H1 (cell line): ENCODE measurements at regions of chr19 and their contacts with region 1.

Region 1: DNA sequence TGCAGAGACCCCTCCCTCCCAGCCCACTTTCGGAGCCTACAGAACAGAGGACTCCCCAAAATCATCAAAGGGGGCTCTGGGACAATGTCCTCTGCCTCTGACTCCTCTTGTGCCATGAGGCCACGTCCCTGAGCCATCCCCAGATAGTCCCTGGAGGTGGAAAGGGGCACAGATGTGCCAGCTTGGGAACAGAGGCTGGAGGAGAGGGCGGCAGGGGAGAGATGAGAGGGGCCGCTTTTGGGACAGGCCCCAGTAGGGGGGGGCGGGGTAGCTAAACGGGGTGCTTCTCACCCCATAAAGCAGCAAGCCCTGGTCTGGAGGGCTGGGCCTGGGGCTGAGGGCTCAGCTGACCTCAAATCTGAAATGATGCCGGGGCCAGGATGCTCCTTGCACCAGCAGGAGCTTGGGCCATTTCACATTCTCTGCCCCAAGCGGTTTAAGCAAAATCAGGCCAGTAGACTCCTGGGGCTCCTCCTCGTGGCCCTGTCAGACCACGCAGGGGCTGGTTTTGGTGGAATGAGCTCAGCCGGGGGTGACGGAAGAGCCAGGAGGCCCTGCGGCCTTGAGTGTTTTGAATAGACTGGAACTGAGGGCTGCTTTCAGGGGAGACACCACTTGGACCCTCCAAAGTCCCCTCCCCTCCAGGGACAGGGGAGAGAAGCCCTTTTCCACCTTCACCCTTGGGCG is 27.1 kb downstream of the ONECUT3 start:
- DNase-seq: no peak
- H3K4me3 ChIP-seq: no peak overlapping the region
- H3K27ac ChIP-seq: no peak overlapping the region
- H3K4me1 ChIP-seq: peaks cover 0 to 5% (median 2%) of the 10 kb centered on the region in 4 experiments; a peak in 3 of 7 replicates
- H3K27me3 ChIP-seq: peaks cover 22 to 57% (median 55%) of the 10 kb centered on the region in 4 experiments
- CTCF ChIP-seq: peak in 2 of 3 experiments; percentile 6 to 42; a peak in 3 of 4 replicates
- EP300 ChIP-seq: no peak
- POLR2A ChIP-seq: no peak
- RAD21 ChIP-seq: no peak

Region 2: DNA sequence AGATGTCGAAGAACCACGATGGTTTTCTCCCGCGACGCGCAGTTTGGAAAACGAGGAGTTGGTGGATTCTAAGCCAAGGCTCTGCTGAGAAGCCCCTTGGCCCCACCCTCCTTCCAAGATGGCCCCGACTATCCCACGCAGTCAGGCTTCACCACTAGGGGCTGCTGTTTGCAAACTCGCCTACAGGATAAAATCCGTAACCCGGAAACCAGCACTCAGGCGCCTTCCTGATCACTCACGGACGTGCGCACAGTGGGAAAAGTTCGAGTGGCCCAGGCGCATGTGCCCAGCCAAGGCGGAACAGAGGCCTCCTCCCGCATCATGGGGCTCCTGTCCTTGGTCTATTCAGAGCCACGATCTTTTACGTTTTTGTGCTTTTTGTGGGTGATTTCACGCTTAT is 156.0 kb before region 1 on chr19:
- CTCF ChIA-PET with region 1: no interaction called
- POLR2A ChIA-PET with region 1: no interaction called
- DNase-seq: peak; percentile 49 to 87
- H3K4me3 ChIP-seq: no peak overlapping the region
- H3K27ac ChIP-seq: no peak overlapping the region
- H3K4me1 ChIP-seq: peaks cover 0 to 8% (median 4%) of the 10 kb centered on the region in 4 experiments; a peak in 3 of 7 replicates
- H3K27me3 ChIP-seq: no peaks in the 10 kb centered on the region
- CTCF ChIP-seq: peak; percentile 89 to 96 (median 96)
- EP300 ChIP-seq: no peak
- POLR2A ChIP-seq: no peak
- RAD21 ChIP-seq: peak; percentile 57 to 73

Region 3: DNA sequence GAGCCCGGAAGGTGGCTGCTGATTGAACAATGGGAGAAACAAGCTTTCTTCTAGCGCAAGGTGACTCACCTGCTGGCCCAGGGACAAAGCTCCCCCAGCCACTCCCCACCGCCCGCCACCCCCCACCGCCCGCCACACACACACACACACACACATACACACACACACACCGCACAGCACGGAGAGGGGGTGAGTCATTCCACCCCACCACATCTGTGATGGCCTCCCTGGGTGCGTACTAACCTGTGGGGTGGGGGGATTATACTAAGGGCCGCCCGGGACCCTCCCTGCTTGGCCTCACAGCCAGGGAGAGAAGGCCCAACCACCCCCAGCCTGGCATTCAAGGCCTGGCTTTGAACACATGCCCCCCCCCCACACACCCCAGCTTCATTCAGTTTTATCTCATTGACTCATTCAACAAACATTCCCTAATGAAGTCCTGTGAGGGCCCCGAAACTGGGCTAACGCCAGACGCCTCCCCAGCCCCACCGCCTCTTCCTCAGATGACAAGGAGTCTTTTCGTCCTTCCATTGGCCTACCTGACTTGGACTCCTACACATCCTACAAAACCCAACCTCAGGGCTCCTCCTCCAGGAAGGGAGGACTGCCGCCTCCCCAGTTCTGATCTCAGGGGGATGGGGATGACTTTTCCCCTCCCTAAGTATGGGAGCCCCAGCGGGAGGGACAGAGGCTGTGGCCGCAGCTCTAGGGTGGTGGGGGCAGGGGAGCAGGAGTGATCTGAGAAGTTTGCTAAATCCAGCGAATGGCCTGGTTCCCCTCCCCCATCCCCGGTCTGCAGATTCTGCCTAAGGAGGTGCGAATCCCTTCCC is 32.9 kb before region 1 on chr19:
- CTCF ChIA-PET with region 1: interaction called, 26 read pairs
- POLR2A ChIA-PET with region 1: interaction called, 3 read pairs
- DNase-seq: peak in 1 of 2 experiments; percentile 54
- H3K4me3 ChIP-seq: peak overlapping the region in 3 of 4 experiments; percentile 22 to 59 (median 34); a peak in 3 of 8 replicates
- H3K27ac ChIP-seq: no peak overlapping the region
- H3K4me1 ChIP-seq: peaks cover 0 to 46% (median 27%) of the 10 kb centered on the region in 4 experiments; a peak in 6 of 7 replicates
- H3K27me3 ChIP-seq: peaks cover 67 to 86% (median 78%) of the 10 kb centered on the region in 4 experiments
- CTCF ChIP-seq: no peak
- EP300 ChIP-seq: no peak
- POLR2A ChIP-seq: no peak
- RAD21 ChIP-seq: no peak

Region 4: GRCh38 chr19:1794424-1795172 is 14.2 kb after region 1 on chr19:
- CTCF ChIA-PET with region 1: interaction called, 150 read pairs
- POLR2A ChIA-PET with region 1: interaction called, 4 read pairs
- DNase-seq: peak in 1 of 2 experiments; percentile 39
- H3K4me3 ChIP-seq: no peak overlapping the region
- H3K27ac ChIP-seq: no peak overlapping the region
- H3K4me1 ChIP-seq: peaks cover 0 to 15% (median 8%) of the 10 kb centered on the region in 4 experiments; a peak in 5 of 7 replicates
- H3K27me3 ChIP-seq: peaks cover 0 to 4% (median under 1%) of the 10 kb centered on the region in 4 experiments; a peak in 2 of 7 replicates
- CTCF ChIP-seq: peak in 2 of 3 experiments; percentile 7 to 15; a peak in 2 of 4 replicates
- EP300 ChIP-seq: no peak
- POLR2A ChIP-seq: no peak
- RAD21 ChIP-seq: no peak; a peak in 1 of 4 replicates

Region 5: GRCh38 chr19:1812469-1813196 is 32.2 kb after region 1 on chr19:
- CTCF ChIA-PET with region 1: interaction called, 19 read pairs
- POLR2A ChIA-PET with region 1: interaction called, 3 read pairs
- DNase-seq: peak; percentile 93 to 95
- H3K4me3 ChIP-seq: peak overlapping the region; percentile 49 to 69 (median 56)
- H3K27ac ChIP-seq: no peak overlapping the region; the same call in 1 of the 2 replicates
- H3K4me1 ChIP-seq: peaks cover 0 to 2% (median 0%) of the 10 kb centered on the region in 4 experiments; a peak in 3 of 7 replicates
- H3K27me3 ChIP-seq: peaks cover 0 to 3% (median 0%) of the 10 kb centered on the region in 4 experiments; a peak in 3 of 7 replicates
- CTCF ChIP-seq: peak; percentile 80 to 93 (median 84)
- EP300 ChIP-seq: no peak
- POLR2A ChIP-seq: peak in 1 of 2 experiments; percentile 9; a peak in 1 of 3 replicates
- RAD21 ChIP-seq: peak; percentile 86 to 88

Region 6: DNA sequence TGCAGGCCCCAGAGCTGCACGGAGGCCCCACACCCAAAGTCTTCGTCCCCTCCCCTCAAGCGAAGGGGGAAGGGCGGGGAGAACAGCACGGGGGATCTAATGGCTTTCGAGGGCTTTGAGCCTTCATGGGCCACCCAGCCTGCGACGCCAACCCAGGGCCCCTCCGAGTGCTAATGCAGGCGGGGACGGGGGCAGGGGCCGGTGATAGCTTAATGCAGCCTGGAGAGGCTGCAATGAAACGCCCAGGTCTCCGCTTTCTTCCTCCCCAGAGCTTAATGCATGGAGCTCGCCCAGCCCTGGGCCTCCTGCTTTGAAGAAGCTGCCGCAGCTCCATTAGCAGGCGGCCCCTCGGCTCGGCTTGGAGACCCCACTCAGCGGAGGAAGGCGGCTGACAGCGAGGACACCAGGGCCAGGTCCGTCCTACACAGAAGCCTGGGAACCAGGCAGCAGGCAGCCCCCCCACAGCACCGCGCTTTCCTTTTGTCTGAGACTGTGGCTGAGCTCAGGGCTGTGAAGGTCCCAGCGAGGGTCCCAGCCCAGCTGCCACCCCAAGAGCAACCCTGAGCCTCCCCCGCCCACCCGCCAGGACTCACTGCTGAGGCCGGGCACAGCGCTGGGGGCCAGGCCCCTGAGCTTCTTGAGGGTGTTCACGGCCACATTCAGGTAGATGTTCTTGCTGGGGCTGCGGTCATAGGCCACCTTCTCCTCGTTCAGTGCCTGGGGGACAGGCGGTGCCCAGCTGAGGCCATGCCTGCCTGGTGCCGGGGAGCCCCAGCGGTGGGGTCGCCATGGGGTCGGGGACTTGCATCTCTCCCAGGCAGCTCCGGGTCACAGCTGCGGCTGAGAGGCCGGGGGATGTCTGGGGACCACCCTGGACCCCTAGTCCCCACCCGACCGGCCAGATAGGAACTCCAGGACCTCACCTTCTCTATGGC is 39.2 kb after region 1 on chr19:
- CTCF ChIA-PET with region 1: interaction called, 12 read pairs
- POLR2A ChIA-PET with region 1: no interaction called
- DNase-seq: no peak
- H3K4me3 ChIP-seq: no peak overlapping the region
- H3K27ac ChIP-seq: no peak overlapping the region; the same call in 1 of the 2 replicates
- H3K4me1 ChIP-seq: no peaks in the 10 kb centered on the region; a peak in 1 of 7 replicates
- H3K27me3 ChIP-seq: no peaks in the 10 kb centered on the region
- CTCF ChIP-seq: no peak
- EP300 ChIP-seq: no peak
- POLR2A ChIP-seq: no peak
- RAD21 ChIP-seq: no peak